Spleen (tissue), 13 donors: ENCODE measurements at regions of chr9 and their contacts with region 1.

Region 1: GRCh38 chr9:128532581-128532980 is 19.8 kb upstream of the SPTAN1 start:
- DNase-seq: no peak
- H3K4me3 ChIP-seq: no peak overlapping the region
- H3K27ac ChIP-seq: no peak overlapping the region
- H3K4me1 ChIP-seq: peaks cover 0 to 7% (median 0%) of the 10 kb centered on the region in 6 donors
- H3K27me3 ChIP-seq: no peaks in the 10 kb centered on the region
- CTCF ChIP-seq: no peak
- POLR2A ChIP-seq: no peak

Region 2: GRCh38 chr9:128587453-128587852 is 54.9 kb after region 1 on chr9:
- intact Hi-C with region 1: loop called (anchors 10 kb)
- DNase-seq: no peak
- H3K4me3 ChIP-seq: no peak overlapping the region
- H3K27ac ChIP-seq: no peak overlapping the region
- H3K4me1 ChIP-seq: no peaks in the 10 kb centered on the region
- H3K27me3 ChIP-seq: no peaks in the 10 kb centered on the region
- CTCF ChIP-seq: no peak
- POLR2A ChIP-seq: no peak

Region 3: DNA sequence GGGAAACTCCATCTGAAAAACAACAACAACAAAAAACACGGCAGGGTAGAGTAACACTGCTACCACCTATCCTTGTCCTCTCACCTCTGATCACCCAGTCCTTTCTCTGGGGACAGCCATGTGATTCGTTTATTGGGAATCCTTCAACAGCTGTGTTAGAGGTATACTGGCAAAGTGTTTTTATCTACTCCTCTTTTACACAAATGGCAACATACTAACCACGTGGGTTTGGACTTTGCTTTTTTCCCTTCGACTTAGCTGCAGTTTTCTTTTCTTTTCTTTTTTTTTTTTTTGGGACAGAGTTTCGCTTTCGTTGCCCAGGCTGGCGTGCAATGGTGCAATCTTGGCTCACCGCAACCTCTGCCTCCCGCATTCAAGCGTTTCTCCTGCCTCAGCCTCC is 145.2 kb after region 1 on chr9:
- intact Hi-C with region 1: no loop called
- DNase-seq: no peak
- H3K4me3 ChIP-seq: no peak overlapping the region
- H3K27ac ChIP-seq: no peak overlapping the region
- H3K4me1 ChIP-seq: peaks cover 0 to 22% (median 7%) of the 10 kb centered on the region in 6 donors
- H3K27me3 ChIP-seq: no peaks in the 10 kb centered on the region
- CTCF ChIP-seq: no peak
- POLR2A ChIP-seq: no peak